CD8-positive, alpha-beta memory T cell (primary cell): ENCODE measurements at regions of chrX and their contacts with region 1.

Region 1: GRCh38 chrX:47144626-47145394 is at the starts of genes NDUFB11 and RBM10:
- DNase-seq: peak; percentile 85 to 94 (median 89)
- H3K4me3 ChIP-seq: peak within 1 kb of the TSS; percentile 75
- H3K4me3 Mint-ChIP-seq: peak within 1 kb of the TSS; percentile 93 to 99 (median 97)
- H3K27ac ChIP-seq: peak within 1 kb of the TSS; percentile 85
- H3K27ac Mint-ChIP-seq: peak within 1 kb of the TSS; percentile 96 to 99 (median 97)
- H3K4me1 ChIP-seq: peaks cover 6% of the 10 kb centered on the region
- H3K4me1 Mint-ChIP-seq: peaks cover 27 to 48% (median 35%) of the 10 kb centered on the region in 3 donors
- H3K27me3 ChIP-seq: no peaks in the 10 kb centered on the region
- H3K27me3 Mint-ChIP-seq: peaks cover 0 to 8% of the 10 kb centered on the region in 2 donors
- total RNA-seq, gene NDUFB11: 93.5 to 95.0 TPM
- total RNA-seq, gene RBM10: 74.5 to 74.8 TPM

Region 2: DNA sequence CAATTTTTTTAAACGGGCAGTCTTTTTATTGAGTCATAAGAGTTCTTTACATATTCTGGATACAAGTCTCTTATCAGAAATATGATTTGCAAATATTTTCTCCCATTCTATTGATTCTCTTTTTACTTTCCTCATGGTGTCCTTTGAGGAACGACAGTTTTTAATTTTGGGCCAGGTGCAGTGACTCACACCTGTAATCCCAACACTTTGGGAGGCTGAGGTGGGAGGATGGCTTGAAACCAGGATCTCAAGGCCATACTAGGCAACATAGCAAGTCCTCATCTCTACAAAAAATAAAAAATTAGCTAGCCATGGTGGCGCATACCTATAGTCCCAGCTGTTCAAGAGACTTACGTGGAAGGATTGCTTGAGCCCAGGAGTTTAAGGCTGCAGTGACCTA is 132.7 kb before region 1 on chrX:
- CTCF ChIA-PET with region 1: no interaction called
- POLR2A ChIA-PET with region 1: no interaction called
- DNase-seq: no peak
- H3K4me3 ChIP-seq: no peak overlapping the region
- H3K4me3 Mint-ChIP-seq: no peak overlapping the region
- H3K27ac ChIP-seq: no peak overlapping the region
- H3K27ac Mint-ChIP-seq: no peak overlapping the region
- H3K4me1 ChIP-seq: no peaks in the 10 kb centered on the region
- H3K4me1 Mint-ChIP-seq: no peaks in the 10 kb centered on the region
- H3K27me3 ChIP-seq: no peaks in the 10 kb centered on the region
- H3K27me3 Mint-ChIP-seq: peaks cover 3 to 5% of the 10 kb centered on the region in 2 donors

Region 3: DNA sequence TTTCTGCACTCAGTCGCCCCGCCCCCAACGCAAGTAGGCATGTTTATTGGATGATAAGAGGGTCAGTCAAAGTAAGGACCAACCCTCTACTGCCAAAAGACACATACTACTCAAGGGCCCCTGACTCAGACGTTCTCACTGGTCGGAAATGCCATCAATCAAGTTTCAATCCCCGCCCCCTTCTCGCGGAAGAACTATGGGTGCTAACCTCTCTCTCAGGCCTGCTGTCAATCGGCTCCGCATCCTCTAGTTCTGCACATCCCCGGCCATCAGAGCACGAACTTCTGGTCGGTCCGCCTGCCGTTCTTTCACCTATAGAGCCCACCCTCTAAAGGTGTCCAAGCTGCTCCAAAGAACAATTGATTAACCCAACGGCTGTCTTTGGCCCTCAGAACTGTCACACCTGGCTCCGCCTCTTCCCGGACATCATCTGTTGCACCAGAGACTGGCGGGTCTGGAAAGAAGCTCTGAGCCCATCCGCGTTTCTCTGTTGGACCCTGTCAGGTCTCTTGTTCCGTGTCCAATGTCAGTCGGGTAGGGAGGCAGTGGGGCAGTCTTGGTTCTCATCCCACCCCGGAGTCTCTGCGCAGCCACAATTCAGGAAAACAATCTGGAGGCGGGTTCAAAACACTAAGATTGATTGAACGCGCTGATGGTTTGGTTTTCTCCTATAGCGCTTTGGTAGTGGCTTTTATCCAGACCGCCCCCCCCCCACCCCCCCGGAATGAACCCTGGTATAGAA is 15.5 kb before region 1 on chrX:
- CTCF ChIA-PET with region 1: interaction called, 8 read pairs
- POLR2A ChIA-PET with region 1: interaction called, 19 read pairs
- DNase-seq: peak; percentile 73 to 91 (median 89)
- H3K4me3 ChIP-seq: peak overlapping the region; percentile 60
- H3K4me3 Mint-ChIP-seq: peak overlapping the region; percentile 97 to 99 (median 98)
- H3K27ac ChIP-seq: peak overlapping the region; percentile 43
- H3K27ac Mint-ChIP-seq: peak overlapping the region; percentile 55 to 98 (median 96)
- H3K4me1 ChIP-seq: no peaks in the 10 kb centered on the region
- H3K4me1 Mint-ChIP-seq: peaks cover 0 to 8% (median 3%) of the 10 kb centered on the region in 3 donors
- H3K27me3 ChIP-seq: no peaks in the 10 kb centered on the region
- H3K27me3 Mint-ChIP-seq: peaks cover 0 to 3% of the 10 kb centered on the region in 2 donors

Region 4: DNA sequence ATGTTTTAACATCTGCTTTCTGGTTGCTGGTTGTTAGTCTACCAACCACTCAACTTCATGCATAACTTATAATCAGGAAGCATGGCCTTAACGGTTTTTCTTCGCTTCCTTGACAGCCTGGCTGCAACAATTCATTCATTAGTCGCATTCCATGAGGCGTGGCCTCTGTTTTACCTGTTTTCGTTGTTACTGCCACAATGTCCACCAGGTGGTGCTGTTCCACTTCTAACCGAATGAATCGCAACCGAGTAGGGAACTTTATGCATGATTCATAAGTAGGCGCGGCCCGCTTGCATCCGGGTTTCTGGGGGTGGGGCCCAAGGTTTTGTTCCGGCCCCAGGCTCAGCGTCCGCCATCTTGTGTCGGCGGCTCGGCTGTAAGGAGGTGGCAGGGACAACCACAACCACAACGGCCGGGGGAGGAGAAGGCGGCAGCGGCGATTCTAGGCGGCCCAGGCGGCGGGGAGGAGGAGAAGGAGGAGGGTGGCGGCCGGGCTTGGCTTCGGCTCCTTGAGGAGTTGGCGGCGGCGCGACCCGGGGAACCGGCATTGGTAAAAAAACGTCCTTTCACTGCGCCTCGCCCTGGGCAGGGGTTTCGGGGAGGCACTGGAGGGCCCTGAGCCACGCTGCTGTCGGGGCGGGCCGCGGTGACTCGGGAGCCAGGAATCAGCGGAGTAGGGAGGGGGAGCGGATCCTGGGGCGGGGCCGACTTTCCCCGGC is 48.8 kb after region 1 on chrX and contains the start of gene UBA1:
- CTCF ChIA-PET with region 1: interaction called, 12 read pairs
- POLR2A ChIA-PET with region 1: interaction called, 18 read pairs
- DNase-seq: peak; percentile 84 to 97 (median 95)
- H3K4me3 ChIP-seq: peak within 1 kb of the TSS; percentile 74
- H3K4me3 Mint-ChIP-seq: peak within 1 kb of the TSS; percentile 91 to 100 (median 98)
- H3K27ac ChIP-seq: peak within 1 kb of the TSS; percentile 84
- H3K27ac Mint-ChIP-seq: peak within 1 kb of the TSS; percentile 88 to 100 (median 99)
- H3K4me1 ChIP-seq: peaks cover 46% of the 10 kb centered on the region
- H3K4me1 Mint-ChIP-seq: peaks cover 62 to 77% (median 65%) of the 10 kb centered on the region in 3 donors
- H3K27me3 ChIP-seq: no peaks in the 10 kb centered on the region
- H3K27me3 Mint-ChIP-seq: no peaks in the 10 kb centered on the region
- total RNA-seq, gene UBA1: 225 to 234 TPM

Region 5: DNA sequence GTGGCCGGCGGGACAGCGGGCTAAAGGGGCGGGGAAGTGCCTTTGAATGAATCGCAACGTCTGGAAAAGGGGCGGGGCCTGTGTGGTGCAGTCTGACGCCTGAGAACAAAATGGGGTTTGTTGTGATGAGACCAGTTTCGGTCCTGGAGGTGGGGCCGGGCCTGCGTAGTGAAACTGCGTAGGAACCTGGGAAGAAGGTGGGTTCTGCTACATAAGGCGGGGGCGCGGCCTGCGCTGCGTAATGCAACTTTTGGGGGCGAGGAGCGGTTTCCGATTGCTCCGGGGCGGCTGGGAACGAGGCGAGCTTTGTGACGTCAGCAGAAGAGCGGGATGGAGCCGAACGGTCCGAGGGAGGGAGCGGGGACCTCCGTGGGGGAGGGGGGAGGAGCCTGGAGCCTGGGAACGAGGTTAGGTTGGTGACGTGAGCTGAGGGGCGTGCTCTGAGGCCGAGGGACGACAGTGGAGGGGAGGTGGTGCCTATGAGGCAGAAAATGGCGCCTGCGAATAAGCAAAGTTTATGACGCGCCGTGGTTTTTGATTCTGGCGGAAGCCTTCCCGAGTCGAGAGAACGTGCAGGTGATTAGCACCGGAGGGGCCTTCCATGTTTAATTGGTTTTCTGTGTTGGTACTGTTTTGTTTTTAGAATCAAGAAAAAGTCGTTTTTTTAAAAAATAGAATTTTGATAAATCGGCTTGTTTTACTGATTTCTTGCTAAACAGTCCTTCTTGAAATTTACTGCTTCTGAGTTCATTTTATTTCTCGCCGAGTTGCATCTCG is 88.7 kb after region 1 on chrX:
- CTCF ChIA-PET with region 1: no interaction called
- POLR2A ChIA-PET with region 1: interaction called, 14 read pairs
- DNase-seq: peak; percentile 88 to 98 (median 96)
- H3K4me3 ChIP-seq: peak overlapping the region; percentile 66
- H3K4me3 Mint-ChIP-seq: peak overlapping the region; percentile 92 to 99 (median 93)
- H3K27ac ChIP-seq: peak overlapping the region; percentile 96
- H3K27ac Mint-ChIP-seq: peak overlapping the region; percentile 91 to 99 (median 98)
- H3K4me1 ChIP-seq: peaks cover 25% of the 10 kb centered on the region
- H3K4me1 Mint-ChIP-seq: peaks cover 38 to 46% (median 40%) of the 10 kb centered on the region in 3 donors
- H3K27me3 ChIP-seq: no peaks in the 10 kb centered on the region
- H3K27me3 Mint-ChIP-seq: peaks cover 0 to 7% of the 10 kb centered on the region in 2 donors